HEK293 (cell line): ENCODE measurements at regions of chr6 and their contacts with region 1.

Region 1: DNA sequence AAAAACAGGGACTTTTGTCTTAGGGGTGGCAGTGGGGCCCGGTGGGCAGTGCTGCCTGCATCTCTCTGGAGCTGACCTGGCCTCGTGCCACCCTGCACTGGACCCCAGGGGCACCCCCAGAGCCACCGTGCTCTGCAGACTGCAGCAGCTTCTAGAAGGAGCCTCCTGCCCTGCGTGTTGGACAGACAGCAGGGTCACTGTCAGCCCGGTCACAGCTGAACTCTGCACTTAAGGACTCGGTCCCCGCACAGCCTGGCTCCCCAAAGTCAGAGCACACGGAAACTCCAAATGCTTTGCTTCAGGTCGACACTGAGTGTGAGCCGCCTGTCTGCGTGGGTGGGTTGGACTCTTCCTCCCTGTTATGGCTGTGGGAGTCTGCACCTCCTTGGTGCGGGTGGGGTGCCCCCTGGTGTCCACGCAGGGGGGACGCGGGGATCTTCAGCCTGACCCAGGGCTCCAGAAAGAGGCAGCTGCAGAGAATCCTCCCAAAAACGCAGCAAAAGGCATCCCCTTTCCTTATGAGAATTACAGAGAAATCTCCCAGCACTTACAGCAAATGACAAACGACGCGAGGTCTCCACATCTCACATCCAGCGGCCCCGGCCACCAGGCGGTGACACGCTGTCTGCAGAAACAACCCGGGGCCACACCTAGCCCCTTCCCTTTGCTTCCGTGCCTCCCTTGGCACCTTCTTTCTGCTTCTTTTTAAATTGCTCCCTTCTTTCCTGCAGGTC is 36.3 kb upstream of the DACT2 start:
- H3K4me3 ChIP-seq: no peak overlapping the region
- H3K27ac ChIP-seq: no peak overlapping the region
- H3K4me1 ChIP-seq: no peaks in the 10 kb centered on the region
- CTCF ChIP-seq: peak; percentile 81

Region 2: DNA sequence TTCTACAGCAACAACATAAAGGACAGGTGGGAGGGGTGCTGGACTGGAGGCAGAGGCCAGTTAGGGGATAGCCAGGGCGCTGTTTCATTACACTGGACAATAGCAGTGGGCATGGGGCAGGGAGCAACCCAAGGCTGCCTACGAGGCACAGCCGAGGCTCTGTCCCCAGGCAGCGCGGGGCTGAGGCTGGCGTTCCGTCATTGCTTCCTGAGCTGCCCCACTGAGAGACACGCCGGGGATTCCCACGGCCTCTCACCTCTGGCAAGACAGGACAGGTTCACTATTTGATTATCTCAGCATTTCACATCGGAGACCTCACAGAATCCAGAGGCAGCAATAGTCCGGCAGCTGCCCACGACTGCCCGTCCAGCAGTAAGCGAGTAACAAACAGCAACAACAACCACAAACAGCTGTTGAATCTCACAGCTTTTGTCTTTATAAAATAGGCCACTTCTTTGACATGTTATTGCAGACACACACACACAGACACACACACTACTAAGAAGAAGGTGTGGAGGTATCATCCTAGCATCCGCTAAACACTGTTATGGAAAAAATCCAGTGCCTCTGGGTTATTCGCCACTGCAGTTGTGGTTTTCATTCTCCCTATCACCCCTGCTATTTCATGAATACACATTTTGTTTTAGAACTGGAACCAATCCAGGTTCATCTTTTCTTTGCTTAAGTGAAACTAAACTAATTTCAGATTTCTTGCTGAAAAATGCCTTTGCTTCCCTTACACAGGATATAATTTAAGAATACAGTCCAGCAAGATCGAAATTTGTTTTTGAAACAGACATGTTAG is 339.0 kb before region 1 on chr6:
- CTCF ChIA-PET with region 1: no interaction called
- POLR2A ChIA-PET with region 1: no interaction called
- H3K4me3 ChIP-seq: no peak overlapping the region
- H3K27ac ChIP-seq: no peak overlapping the region
- H3K4me1 ChIP-seq: peaks cover under 1% of the 10 kb centered on the region
- CTCF ChIP-seq: no peak

Region 3: GRCh38 chr6:168060521-168060931 is 295.4 kb before region 1 on chr6:
- CTCF ChIA-PET with region 1: interaction called, 12 read pairs
- POLR2A ChIA-PET with region 1: no interaction called
- H3K4me3 ChIP-seq: no peak overlapping the region
- H3K27ac ChIP-seq: no peak overlapping the region
- H3K4me1 ChIP-seq: no peaks in the 10 kb centered on the region
- CTCF ChIP-seq: peak; percentile 77

Region 4: DNA sequence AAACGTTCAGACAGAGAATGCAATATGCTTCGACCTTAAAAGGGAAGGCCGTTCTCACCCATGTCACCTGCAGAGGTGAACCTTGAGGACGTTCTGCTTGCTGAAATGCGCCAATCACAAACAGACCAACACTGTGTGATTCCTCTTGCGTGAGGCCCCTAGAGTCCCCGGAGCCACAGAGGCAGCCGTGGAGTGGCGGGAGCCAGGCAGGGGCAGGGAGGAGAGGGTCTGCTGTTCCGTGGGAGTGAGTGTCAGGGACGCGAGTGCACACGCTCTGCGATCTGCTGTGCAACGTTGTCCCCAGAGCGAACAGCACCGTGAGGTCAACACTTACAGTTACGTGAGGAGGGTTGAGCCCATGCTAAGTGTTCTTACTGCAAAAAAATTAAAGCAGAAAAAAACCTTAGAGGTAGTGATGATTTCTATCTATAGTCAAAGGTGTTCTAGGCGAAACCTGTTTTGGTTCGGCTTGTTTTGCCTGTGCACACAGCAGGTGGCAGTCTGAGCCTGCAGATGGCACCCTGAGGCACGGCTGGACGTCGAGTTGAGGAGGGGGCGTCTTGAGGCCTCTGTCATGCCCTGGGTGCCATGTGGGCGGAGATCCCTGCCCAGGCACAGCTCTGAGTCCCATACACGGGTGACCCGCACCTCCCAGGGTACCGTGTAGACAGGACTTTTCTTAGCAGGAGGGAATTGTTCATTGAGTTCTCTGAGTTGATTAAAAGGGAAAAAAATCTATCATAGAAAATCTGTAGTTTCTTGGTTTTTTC is 205.1 kb before region 1 on chr6:
- CTCF ChIA-PET with region 1: interaction called, 20 read pairs
- POLR2A ChIA-PET with region 1: no interaction called
- H3K4me3 ChIP-seq: no peak overlapping the region
- H3K27ac ChIP-seq: no peak overlapping the region
- H3K4me1 ChIP-seq: peaks cover 13% of the 10 kb centered on the region; the same call in 1 of the 2 replicates
- CTCF ChIP-seq: peak; percentile 76